ENCODE measurements at regions of chr18 and their contacts with region 1.

Region 1: DNA sequence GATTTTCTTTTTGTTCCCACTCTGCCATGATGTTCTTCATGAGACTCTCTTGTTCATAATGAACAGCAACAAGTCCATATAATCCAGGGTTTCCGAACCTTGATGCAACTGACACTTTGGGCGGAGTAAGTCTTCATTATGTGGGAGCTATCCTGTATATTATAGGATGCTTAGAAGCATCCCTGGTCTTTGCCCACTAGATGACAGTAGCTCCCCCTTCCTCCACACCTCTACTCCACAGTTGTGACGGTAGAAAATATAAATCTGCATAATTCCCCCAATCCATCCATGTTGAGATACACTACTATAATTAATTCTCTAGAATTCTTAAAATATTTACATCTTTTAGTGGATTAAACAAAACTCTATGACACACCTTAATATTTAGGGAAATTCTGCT is 482.2 kb upstream of the CELF4 start:
- DNase-seq: no peak
- ATAC-seq: no peak
- H3K4me3 Mint-ChIP-seq: no peak overlapping the region
- H3K27ac Mint-ChIP-seq: no peak overlapping the region
- H3K4me1 Mint-ChIP-seq: no peaks in the 10 kb centered on the region
- H3K27me3 Mint-ChIP-seq: no peaks in the 10 kb centered on the region

Region 2: GRCh38 chr18:38033282-38033681 is 14.5 kb before region 1 on chr18:
- CTCF ChIA-PET with region 1: no interaction called
- POLR2A ChIA-PET with region 1: no interaction called
- intact Hi-C with region 1: no loop called
- DNase-seq: no peak
- ATAC-seq: no peak
- H3K4me3 Mint-ChIP-seq: no peak overlapping the region
- H3K27ac Mint-ChIP-seq: no peak overlapping the region
- H3K4me1 Mint-ChIP-seq: no peaks in the 10 kb centered on the region
- H3K27me3 Mint-ChIP-seq: no peaks in the 10 kb centered on the region

Region 3: GRCh38 chr18:38087538-38087937 is 39.7 kb after region 1 on chr18:
- CTCF ChIA-PET with region 1: no interaction called
- POLR2A ChIA-PET with region 1: no interaction called
- intact Hi-C with region 1: loop called in 1 of 2 experiments (anchors 10 kb)
- DNase-seq: no peak
- ATAC-seq: no peak
- H3K4me3 Mint-ChIP-seq: no peak overlapping the region
- H3K27ac Mint-ChIP-seq: no peak overlapping the region
- H3K4me1 Mint-ChIP-seq: no peaks in the 10 kb centered on the region
- H3K27me3 Mint-ChIP-seq: no peaks in the 10 kb centered on the region